ENCODE measurements at regions of chr3 and their contacts with region 1.

Region 1: DNA sequence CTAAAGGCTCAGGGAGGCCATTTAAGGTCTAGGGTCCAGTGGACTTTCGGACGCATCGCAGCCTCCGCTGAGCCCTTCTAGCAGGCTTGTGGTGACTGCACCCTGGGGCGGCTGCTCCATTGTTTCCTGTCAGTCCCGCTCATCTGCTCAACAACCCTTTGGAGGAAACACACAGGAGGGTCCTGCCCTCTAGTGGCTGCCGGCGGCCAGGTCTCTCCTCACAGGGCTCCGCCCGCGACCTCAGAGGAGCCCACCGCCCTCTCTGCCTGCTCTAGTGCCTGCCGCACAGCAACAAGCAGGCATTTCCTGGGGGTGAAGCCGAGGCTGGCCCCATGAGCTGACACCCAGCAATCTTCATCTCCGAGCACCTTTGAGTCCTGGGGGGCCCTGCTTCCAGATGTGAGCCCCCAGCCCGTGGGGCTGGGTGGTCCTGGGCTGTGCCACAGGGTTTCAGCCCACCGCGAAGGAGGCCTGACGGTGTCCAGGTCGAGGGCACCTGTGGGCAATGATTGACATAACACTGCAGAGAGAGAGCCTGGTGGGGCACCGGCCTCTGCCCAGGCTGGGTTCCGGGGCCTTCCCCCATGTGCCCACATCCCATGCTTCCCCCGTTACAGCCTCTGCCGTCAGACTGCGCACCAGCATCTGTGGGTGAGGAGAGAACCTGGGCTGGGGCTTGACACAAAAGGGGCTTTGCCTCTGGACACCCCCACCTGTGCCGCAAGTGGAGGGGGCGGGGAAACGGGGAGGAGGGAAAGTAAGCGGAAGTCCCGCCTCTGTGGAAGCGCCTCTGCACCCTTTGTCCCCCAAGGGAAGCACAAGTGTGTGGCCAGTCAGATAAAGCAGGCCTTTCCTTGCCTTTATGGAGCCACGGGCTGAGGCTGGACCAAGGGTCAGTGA is 27.0 kb upstream of the SFMBT1 start:
- DNase-seq: peak; percentile 87 to 92 (median 88)
- H3K4me3 ChIP-seq: peak overlapping the region; percentile 77 to 79
- H3K4me3 Mint-ChIP-seq: peak overlapping the region; percentile 88 to 96 (median 92)
- H3K27ac ChIP-seq: peak overlapping the region; percentile 67
- H3K27ac Mint-ChIP-seq: peak overlapping the region; percentile 90 to 96 (median 94)
- H3K4me1 ChIP-seq: peaks cover 10% of the 10 kb centered on the region
- H3K4me1 Mint-ChIP-seq: peaks cover 7 to 19% (median 16%) of the 10 kb centered on the region in 4 donors
- H3K27me3 ChIP-seq: no peaks in the 10 kb centered on the region
- H3K27me3 Mint-ChIP-seq: no peaks in the 10 kb centered on the region

Region 2: DNA sequence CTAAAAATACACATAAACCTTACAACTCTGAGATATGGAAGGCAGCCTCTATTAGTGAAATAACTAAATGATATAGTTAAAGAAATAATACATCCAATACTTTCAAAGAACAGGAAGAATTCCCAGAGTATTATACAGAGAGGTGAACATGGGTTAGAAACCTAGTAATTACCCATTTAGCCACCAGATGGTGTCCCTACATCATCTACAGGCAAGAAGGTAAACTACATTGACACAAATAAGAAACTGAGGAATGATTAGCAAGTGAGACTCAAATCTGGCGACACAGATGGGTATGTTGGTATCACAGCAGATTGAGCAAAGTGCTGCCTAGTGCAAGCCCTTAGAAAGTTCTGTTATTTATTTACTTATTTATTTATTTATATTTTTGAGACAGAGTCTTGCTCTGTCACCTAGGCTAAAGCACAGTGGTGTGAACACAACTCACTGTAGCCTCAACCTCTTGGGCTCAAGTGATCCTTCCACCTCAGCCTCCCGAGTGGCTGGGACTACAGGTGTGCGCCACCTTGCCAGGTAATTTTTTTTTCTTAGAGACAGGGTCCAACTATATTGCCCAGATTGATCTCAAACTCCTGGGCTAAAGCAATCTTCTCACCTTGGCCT is 330.4 kb before region 1 on chr3:
- CTCF ChIA-PET with region 1: interaction called, 11 read pairs
- POLR2A ChIA-PET with region 1: no interaction called
- intact Hi-C with region 1: loop called (anchors 1 kb)
- DNase-seq: peak in 4 of 5 donors; percentile 16 to 33 (median 27)
- H3K4me3 ChIP-seq: no peak overlapping the region
- H3K4me3 Mint-ChIP-seq: no peak overlapping the region
- H3K27ac ChIP-seq: no peak overlapping the region
- H3K27ac Mint-ChIP-seq: no peak overlapping the region
- H3K4me1 ChIP-seq: no peaks in the 10 kb centered on the region
- H3K4me1 Mint-ChIP-seq: no peaks in the 10 kb centered on the region
- H3K27me3 ChIP-seq: no peaks in the 10 kb centered on the region
- H3K27me3 Mint-ChIP-seq: no peaks in the 10 kb centered on the region

Region 3: GRCh38 chr3:52851348-52851747 is 221.6 kb before region 1 on chr3:
- CTCF ChIA-PET with region 1: interaction called, 6 read pairs
- POLR2A ChIA-PET with region 1: no interaction called
- intact Hi-C with region 1: loop called (anchors 1 kb)
- DNase-seq: peak in 4 of 5 donors; percentile 20 to 27 (median 23)
- H3K4me3 ChIP-seq: no peak overlapping the region
- H3K4me3 Mint-ChIP-seq: no peak overlapping the region
- H3K27ac ChIP-seq: no peak overlapping the region
- H3K27ac Mint-ChIP-seq: no peak overlapping the region
- H3K4me1 ChIP-seq: no peaks in the 10 kb centered on the region
- H3K4me1 Mint-ChIP-seq: no peaks in the 10 kb centered on the region
- H3K27me3 ChIP-seq: no peaks in the 10 kb centered on the region
- H3K27me3 Mint-ChIP-seq: no peaks in the 10 kb centered on the region

Region 4: DNA sequence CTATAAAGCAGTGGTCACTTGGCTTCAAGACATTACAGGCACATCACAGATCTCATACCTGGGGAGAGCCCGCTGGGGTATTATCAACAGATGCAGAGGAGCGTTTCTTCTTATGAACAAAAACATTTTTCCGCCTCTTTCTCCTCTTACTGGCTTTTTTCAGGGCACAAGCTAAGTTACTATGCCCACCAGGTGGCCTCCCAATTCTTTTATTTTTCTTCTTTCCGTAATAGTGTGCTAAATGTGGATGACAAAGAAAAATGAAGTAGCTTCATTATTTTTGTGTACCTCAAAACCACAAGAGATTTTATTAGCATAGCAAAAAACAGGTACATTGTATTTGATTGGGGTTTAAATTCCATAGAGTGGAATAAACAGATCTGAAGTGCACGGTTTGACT is 165.4 kb before region 1 on chr3:
- CTCF ChIA-PET with region 1: no interaction called
- POLR2A ChIA-PET with region 1: no interaction called
- intact Hi-C with region 1: loop called (anchors 1 kb)
- DNase-seq: no peak
- H3K4me3 ChIP-seq: no peak overlapping the region
- H3K4me3 Mint-ChIP-seq: no peak overlapping the region
- H3K27ac ChIP-seq: no peak overlapping the region
- H3K27ac Mint-ChIP-seq: peak overlapping the region in 1 of 7 donors; percentile 55
- H3K4me1 ChIP-seq: no peaks in the 10 kb centered on the region
- H3K4me1 Mint-ChIP-seq: no peaks in the 10 kb centered on the region
- H3K27me3 ChIP-seq: no peaks in the 10 kb centered on the region
- H3K27me3 Mint-ChIP-seq: no peaks in the 10 kb centered on the region

Region 5: GRCh38 chr3:52983336-52983807 is 89.5 kb before region 1 on chr3:
- CTCF ChIA-PET with region 1: no interaction called
- POLR2A ChIA-PET with region 1: interaction called, 3 read pairs
- intact Hi-C with region 1: loop called (anchors 1 kb)
- DNase-seq: peak; percentile 85 to 87 (median 86)
- H3K4me3 ChIP-seq: no peak overlapping the region
- H3K4me3 Mint-ChIP-seq: peak overlapping the region; percentile 13 to 87 (median 77)
- H3K27ac ChIP-seq: peak overlapping the region; percentile 19
- H3K27ac Mint-ChIP-seq: peak overlapping the region; percentile 85 to 97 (median 94)
- H3K4me1 ChIP-seq: peaks cover 37% of the 10 kb centered on the region
- H3K4me1 Mint-ChIP-seq: peaks cover 34 to 64% (median 45%) of the 10 kb centered on the region in 4 donors
- H3K27me3 ChIP-seq: no peaks in the 10 kb centered on the region
- H3K27me3 Mint-ChIP-seq: no peaks in the 10 kb centered on the region

Measured in CD4-positive, alpha-beta memory T cell (primary cell).